ENCODE measurements at regions of chr11 and their contacts with region 1.

Region 1: GRCh38 chr11:12167098-12168000 is 57.0 kb downstream of the MICAL2 start:
- DNase-seq: no peak
- ATAC-seq: peak; percentile 62
- H3K4me3 Mint-ChIP-seq: no peak overlapping the region
- H3K27ac Mint-ChIP-seq: peak overlapping the region; percentile 70
- H3K4me1 Mint-ChIP-seq: peaks cover 61% of the 10 kb centered on the region
- H3K27me3 Mint-ChIP-seq: no peaks in the 10 kb centered on the region

Region 2: DNA sequence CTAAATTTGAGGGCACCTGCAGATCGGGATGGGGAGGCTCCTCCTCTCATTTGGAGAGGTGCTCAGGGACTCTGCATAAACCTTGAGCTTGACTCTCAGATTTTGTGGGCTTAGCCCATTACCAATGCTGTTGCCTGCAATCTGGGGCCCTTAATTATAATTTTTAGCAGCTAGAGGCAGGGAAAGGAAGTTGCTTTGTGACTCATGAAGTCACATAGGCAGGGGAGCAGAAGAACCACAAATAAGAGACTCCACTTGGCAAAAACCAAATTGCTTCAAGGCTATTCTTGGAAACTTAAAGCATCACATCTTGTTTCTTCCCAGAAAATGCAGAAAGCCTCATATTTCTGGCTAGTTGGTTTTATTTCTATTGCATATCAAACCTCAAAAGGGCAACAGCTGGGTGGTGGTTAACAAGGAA is 10.1 kb before region 1 on chr11:
- CTCF ChIA-PET with region 1: interaction called, 13 read pairs
- DNase-seq: peak; percentile 49
- ATAC-seq: peak; percentile 77
- H3K4me3 Mint-ChIP-seq: no peak overlapping the region
- H3K27ac Mint-ChIP-seq: peak overlapping the region; percentile 89
- H3K4me1 Mint-ChIP-seq: peaks cover 72% of the 10 kb centered on the region
- H3K27me3 Mint-ChIP-seq: no peaks in the 10 kb centered on the region

Region 3: GRCh38 chr11:12192794-12193514 is 25.6 kb after region 1 on chr11:
- CTCF ChIA-PET with region 1: no interaction called
- DNase-seq: no peak
- ATAC-seq: no peak
- H3K4me3 Mint-ChIP-seq: no peak overlapping the region
- H3K27ac Mint-ChIP-seq: peak overlapping the region; percentile 3
- H3K4me1 Mint-ChIP-seq: peaks cover 70% of the 10 kb centered on the region
- H3K27me3 Mint-ChIP-seq: no peaks in the 10 kb centered on the region

Measured in activated CD8-positive, alpha-beta memory T cell treated with anti-CD3 and anti-CD28 coated beads, Interleukin-2, amount 10 ng/mL, durations not matched to agents 7 days and 5 days (primary cell).